Head of caudate nucleus (tissue), 42 donors: ENCODE measurements at regions of chr19 and their contacts with region 1.

Region 1: DNA sequence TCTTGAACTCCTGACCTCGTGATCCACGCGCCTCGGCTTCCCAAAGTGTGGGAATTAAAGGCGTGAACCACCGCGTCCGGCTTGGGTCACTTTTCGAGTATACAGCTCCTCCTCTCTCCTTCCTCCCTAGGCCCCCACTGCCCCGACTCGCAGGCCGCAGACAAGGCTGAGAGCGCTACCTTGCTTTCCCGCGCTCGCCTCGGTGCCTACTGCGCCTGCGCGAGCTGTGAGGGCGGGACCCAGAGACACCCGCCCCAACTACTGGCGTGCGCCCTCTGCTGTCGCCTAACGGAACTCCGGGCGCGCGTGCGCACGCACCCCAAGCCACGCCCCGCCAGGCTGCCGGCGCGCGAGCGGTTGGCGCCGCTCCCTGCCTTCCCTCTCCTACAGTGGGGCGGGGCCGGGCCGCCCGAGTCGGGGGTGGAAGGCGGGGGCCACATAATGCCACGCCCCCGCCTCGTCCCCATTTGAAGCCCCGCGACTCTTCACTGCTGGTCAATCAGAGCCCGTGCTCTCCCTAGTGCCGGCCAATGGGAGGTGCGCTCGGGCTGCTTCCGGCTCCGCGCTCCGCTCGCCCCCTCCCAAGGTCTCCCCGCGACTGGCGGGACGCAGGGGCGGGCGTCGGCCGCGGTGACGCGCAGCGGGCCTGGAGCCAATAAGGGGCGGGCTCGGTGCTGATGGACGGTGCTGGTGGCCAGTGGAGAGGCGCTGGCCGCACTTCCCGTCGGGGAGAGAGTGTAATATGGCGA is at the start of gene RAB8A:
- DNase-seq: peak; percentile 96 to 100 (median 99)

Region 2: GRCh38 chr19:16041299-16041990 is 69.9 kb before region 1 on chr19:
- intact Hi-C with region 1: loop called (anchors 5 kb)
- DNase-seq: peak; percentile 42 to 93 (median 84)

Region 3: DNA sequence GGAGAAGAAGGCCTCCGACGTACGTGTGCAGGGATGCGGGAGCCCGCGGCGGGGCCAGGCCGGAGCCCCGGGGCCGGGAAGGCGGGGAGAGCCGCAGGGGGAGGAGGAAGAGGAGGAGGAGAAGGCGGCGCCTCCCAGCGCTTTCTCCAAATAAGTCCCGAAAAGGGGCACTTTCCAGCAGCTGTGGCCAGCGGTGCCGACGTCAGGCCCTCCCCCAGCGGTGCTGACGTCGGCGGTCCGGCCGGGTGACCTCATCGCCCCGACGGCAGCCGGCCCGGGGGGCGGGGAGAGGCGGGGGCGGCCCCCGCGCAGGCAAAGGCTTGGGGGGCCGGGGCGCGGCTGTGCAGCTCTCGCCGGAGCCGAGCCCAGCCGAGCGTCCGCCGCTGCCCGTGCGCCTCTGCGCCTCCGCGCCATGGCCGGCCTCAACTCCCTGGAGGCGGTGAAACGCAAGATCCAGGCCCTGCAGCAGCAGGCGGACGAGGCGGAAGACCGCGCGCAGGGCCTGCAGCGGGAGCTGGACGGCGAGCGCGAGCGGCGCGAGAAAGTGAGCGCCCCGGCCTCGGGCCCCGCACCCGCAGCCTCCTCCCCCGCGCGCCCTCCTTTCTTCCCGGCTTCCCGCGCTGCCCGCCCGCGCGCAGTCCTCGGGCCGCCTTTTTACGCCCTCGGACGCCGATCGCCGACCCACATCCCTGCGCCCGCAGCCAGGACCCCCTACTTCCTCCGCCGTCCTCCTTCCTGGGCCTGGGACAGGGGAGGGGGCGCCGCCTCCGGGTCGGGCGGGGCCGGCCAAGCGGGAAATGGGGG is 35.0 kb before region 1 on chr19 and contains the start of gene TPM4:
- intact Hi-C with region 1: loop called (anchors 5 kb)
- DNase-seq: peak; percentile 76 to 95 (median 87)

Region 4: DNA sequence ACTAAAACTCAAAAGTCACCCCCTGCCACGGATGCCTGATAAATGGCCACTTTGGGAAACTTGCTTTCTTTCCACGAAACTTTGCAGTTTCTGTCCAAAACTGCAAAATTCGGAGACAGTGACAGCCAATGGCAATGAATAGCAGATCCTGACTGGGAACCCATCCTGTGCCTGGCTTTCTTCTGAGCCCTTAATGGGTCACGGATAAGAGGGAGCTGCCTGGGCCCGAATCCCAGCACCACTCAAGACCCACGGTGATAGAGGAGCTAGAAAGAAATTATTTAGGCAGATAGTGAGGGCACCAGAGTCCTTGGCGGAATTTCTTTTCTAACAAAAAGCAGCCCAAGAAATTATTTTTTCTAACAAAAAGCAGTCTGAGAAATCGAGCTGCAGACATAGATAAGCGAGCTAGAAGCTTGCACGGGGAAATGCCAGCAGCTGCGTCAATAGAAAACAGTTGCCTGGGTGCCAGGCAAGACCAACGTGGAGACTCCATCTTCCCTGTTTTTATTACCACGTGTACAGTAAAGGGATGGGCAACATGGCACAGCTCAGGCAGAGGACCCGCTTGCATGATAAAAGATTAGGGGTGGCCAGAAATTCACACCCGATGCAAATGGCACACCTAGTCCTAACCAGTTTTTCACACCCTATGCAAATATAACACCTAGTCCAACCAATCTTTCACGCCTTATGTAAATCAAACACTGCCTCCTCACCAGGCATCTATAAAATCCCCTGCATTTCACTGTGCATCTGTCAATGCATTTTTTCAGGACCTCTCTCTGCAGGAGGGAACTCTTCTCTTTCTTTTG is 25.1 kb after region 1 on chr19:
- intact Hi-C with region 1: no loop called
- DNase-seq: no peak

Region 5: DNA sequence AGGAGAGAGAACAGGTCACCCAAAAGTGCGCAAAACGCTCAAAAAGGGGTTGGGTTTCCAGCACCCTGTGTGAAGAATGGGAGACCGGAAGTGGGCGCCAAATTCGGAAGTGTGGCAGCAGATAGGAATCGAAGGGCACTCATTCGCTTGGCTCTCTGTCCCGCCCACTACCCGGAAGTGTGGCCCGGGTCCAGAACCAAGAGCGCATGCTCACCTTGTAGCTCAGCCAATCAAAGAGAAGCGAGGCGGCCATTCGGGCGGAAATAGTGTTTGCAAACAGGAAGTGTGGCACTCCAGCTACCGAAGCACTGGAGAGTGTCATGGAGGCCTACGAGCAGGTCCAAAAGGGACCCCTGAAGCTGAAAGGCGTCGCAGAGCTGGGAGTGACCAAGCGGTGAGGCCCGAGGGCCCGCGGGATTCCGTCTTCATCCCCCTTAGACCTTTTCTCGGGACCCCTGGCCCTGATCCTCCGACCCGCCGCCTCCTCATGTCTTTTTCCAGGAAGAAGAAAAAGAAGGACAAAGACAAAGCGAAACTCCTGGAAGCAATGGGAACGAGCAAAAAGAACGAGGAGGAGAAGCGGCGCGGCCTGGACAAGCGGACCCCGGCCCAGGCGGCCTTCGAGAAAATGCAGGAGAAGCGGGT is 73.9 kb after region 1 on chr19 and contains the start of gene FAM32A:
- intact Hi-C with region 1: loop called (anchors 5 kb)
- DNase-seq: peak; percentile 91 to 99 (median 97)